Activated T-helper 1 cell treated with anti-CD3 and anti-CD28 coated beads, Interleukin-12 subunit alpha, Interleukin-12 subunit beta, Interleukin-2, Interleukin-4 antibody, amounts not matched to agents 30 ng/mL and 10 ng/mL and 1 ng/mL, durations not matched to agents 14 hours and 24 hours and 36 hours (primary cell): ENCODE measurements at regions of chr3 and their contacts with region 1.

Region 1: DNA sequence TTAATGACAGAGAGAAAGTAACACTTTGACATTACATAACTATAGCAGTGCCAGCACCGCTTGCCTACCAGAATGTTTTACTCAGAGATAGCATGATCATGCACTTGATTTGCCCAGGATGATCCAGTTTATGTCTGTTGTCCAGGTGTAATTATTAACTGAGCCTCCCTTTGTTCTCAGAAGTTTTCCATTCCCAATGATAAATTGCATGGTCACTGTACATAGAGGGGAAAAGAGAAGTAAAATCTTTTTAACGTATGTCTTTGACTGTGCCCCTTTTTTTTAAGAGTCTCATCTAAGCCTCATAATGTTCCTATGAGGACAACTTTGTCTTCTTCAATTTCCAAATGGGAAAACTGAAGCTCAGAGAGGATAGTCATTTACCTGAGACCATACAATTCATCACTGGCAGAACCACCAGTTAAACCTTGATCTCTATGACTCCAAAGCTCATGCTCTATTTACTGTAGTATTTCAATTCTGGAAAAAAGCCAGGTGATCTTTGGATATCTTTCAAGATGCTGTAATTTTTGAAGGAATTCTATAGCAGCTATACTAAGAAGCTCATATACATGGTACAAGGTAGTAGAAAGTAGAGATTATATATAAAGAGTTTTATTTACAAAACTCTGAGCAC is 25.1 kb downstream of the C3orf85 start:
- DNase-seq: no peak
- H3K4me3 Mint-ChIP-seq: no peak overlapping the region
- H3K27ac Mint-ChIP-seq: no peak overlapping the region
- H3K4me1 Mint-ChIP-seq: no peaks in the 10 kb centered on the region
- H3K27me3 Mint-ChIP-seq: peaks cover 3% of the 10 kb centered on the region

Region 2: DNA sequence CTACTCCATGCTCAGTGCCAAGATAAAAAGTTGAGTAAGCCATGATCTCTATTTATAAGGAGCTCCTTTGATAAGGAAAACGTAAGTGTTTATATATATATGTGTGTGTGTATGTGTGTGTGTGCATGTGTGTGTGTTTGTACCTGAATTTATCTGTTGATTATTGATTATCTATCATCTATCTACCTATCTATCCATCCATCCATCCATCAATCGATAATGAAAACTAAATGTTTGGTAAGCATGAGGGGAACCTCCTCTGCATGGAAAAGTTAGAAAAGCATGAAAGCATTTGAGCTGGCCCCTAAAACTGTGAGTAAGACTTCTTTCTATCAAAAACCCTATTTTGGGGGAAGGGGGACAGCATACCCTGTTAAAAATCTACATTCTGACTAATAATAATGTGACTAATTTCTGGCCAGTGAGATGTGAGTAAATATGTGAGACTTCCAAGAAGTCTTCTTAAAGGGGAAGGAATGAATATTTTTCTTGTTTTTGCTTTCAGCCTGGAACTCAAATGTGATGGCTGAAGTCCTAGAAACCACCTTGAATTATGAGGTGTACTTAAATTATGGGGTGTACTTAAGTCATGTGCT is 29.7 kb after region 1 on chr3:
- intact Hi-C with region 1: loop called (anchors 1 kb)
- DNase-seq: no peak
- H3K4me3 Mint-ChIP-seq: no peak overlapping the region
- H3K27ac Mint-ChIP-seq: no peak overlapping the region
- H3K4me1 Mint-ChIP-seq: no peaks in the 10 kb centered on the region
- H3K27me3 Mint-ChIP-seq: no peaks in the 10 kb centered on the region

Region 3: GRCh38 chr3:109265295-109265694 is 103.7 kb after region 1 on chr3:
- intact Hi-C with region 1: no loop called
- DNase-seq: no peak
- H3K4me3 Mint-ChIP-seq: no peak overlapping the region
- H3K27ac Mint-ChIP-seq: no peak overlapping the region
- H3K4me1 Mint-ChIP-seq: no peaks in the 10 kb centered on the region
- H3K27me3 Mint-ChIP-seq: no peaks in the 10 kb centered on the region